ENCODE measurements at regions of chr7 and their contacts with region 1.

Region 1: GRCh38 chr7:116258734-116259133 is 48.4 kb downstream of the TES start:
- DNase-seq: no peak
- ATAC-seq: peak; percentile 60

Region 2: GRCh38 chr7:116367221-116367813 is 108.6 kb after region 1 on chr7:
- intact Hi-C with region 1: no loop called
- DNase-seq: no peak
- ATAC-seq: no peak

Region 3: DNA sequence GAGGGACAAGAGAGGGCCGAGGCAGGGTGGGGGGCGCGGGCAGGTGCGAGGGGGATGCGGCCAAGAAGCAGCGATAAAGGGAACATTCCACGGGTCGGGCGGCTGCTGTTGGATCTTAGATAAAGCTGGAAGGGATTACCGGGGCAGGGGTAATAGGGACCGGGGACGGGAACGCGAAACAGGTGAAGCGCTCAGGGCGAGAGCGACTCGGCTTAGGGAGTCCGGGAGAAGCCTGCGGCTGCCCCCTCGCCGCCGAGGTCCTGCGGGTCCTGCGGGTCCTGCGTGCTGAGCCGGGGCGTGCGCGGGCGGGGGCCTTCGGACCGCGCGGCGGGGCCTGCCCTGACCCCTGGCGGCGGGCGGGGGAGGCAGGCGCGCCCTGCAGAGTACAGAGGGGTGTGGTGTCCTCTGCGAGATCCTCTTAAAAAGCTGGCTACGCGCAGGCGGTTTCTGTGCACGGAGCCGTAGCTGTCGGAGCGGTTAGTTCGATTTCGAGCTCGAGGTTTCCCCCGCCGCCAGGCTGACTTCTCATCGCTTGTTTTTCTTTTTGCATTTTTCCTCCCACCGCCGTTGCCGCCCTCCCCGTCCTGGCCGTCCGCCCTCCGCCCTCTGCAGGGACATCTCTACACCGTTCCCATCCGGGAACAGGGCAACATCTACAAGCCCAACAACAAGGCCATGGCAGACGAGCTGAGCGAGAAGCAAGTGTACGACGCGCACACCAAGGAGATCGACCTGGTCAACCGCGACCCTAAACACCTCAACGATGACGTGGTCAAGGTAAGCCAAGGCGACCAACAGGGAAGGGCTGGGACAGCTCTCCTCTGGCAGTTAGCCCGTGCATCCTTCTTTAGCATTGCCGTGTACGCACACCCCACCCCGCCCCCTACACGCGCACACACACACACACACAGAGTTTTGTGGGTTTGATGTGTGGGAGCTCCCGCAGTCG is 267.5 kb after region 1 on chr7:
- intact Hi-C with region 1: loop called (anchors 10 kb)
- DNase-seq: peak; percentile 92
- ATAC-seq: peak; percentile 87

Region 4: GRCh38 chr7:116588641-116589594 is 330.2 kb after region 1 on chr7:
- intact Hi-C with region 1: loop called (anchors 2 kb)
- DNase-seq: no peak
- ATAC-seq: peak; percentile 50

Region 5: GRCh38 chr7:116809636-116810266 is 551.0 kb after region 1 on chr7:
- intact Hi-C with region 1: loop called (anchors 5 kb)
- DNase-seq: no peak
- ATAC-seq: peak; percentile 71

Measured in left ventricle myocardium superior (tissue), 1 donor.